Left ventricle myocardium inferior (tissue), 1 donor: ENCODE measurements at regions of chr2 and their contacts with region 1.

Region 1: GRCh38 chr2:112626604-112627059 is 19.1 kb upstream of the SLC20A1 start:
- DNase-seq: peak; percentile 56
- H3K4me3 ChIP-seq: peak overlapping the region; percentile 34
- H3K27ac ChIP-seq: peak overlapping the region; percentile 77
- H3K4me1 ChIP-seq: peaks cover 40% of the 10 kb centered on the region
- H3K27me3 ChIP-seq: peaks cover 15% of the 10 kb centered on the region
- CTCF ChIP-seq: peak; percentile 89

Region 2: DNA sequence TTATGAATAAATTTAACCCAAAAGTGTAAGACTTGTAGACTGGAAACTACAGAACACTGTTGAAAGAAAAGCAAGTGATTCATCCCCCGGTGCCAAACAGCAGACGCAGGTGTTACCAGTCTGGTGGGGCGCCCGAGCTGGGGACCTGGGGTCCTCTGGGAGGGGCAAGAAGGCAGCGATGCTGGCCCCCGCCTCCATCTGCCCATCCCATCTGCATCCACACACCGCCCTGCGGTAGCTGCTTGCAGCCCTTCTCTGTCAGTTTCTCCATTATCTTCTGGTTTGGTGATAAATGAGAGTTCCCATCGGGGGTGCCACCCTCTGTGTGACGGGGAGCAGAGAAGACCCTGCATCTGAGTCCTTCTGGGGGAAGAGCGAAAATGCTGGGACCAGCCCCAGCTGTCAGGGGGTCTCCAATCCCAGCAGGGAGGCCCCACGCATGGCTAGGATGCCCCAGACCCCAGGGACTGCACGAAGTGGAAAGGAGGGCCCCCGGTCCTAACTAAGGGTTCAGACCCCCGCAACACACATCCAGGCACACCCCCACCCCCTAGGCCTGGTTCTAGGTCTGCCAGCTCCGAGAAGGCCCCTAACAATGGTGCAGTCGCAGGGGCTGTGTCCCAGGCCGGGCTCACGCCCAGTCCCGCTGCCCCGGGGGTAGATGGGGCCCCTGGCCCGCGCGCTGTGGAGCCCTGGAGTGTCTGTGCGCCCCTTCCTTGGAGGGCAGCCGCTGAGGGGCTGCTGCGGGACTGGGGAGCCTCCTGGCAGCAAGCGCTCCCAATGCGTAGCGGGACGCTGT is 192.5 kb before region 1 on chr2:
- intact Hi-C with region 1: no loop called
- DNase-seq: no peak
- H3K4me3 ChIP-seq: peak overlapping the region; percentile 72
- H3K27ac ChIP-seq: no peak overlapping the region
- H3K4me1 ChIP-seq: peaks cover 8% of the 10 kb centered on the region
- H3K27me3 ChIP-seq: peaks cover 35% of the 10 kb centered on the region
- CTCF ChIP-seq: no peak

Region 3: GRCh38 chr2:112685271-112685884 is 58.7 kb after region 1 on chr2:
- intact Hi-C with region 1: loop called (anchors 10 kb)
- DNase-seq: no peak
- H3K4me3 ChIP-seq: no peak overlapping the region
- H3K27ac ChIP-seq: no peak overlapping the region
- H3K4me1 ChIP-seq: peaks cover 4% of the 10 kb centered on the region
- H3K27me3 ChIP-seq: no peaks in the 10 kb centered on the region
- CTCF ChIP-seq: no peak

Region 4: DNA sequence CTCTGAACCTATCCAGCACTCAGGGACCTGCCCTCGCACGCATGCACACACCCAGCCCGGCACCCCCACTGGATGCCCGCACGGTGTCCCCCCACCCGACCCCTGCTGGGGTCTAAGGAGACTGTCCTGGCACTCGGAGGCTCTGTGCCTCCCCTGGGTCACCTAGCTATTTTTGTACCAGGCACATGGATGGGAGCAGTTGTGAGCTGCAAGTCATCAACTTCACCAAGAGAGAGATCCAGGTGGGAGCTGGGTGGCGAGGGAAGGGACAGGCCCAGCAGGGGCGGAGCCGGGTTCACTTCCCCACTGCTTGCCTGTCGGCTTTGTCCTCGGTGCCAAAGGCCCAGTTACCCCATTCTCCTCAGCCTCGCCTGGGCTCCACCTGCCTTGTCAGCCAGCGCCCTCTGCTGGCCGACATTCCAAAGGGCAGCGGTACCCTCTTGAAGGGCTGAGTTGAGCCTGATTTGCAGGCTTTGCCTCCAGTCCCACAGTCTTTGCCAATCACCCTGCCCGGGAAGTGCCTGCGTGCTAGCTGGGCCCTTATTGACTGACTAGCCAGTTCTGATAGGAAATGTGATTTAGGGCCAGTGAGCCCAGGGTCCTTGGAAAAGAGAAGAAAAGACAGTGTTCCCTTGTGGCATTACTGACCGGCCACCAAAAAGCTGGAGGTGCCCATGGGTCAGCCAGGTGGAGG is 100.0 kb after region 1 on chr2:
- intact Hi-C with region 1: loop called (anchors 10 kb)
- DNase-seq: peak; percentile 86
- H3K4me3 ChIP-seq: no peak overlapping the region
- H3K27ac ChIP-seq: no peak overlapping the region
- H3K4me1 ChIP-seq: no peaks in the 10 kb centered on the region
- H3K27me3 ChIP-seq: peaks cover 29% of the 10 kb centered on the region
- CTCF ChIP-seq: peak; percentile 95